PC-9 (cell line): ENCODE measurements at regions of chr9 and their contacts with region 1.

Region 1: GRCh38 chr9:33480087-33480486 is 6.4 kb upstream of the NOL6 start:
- DNase-seq: no peak
- H3K4me3 ChIP-seq: no peak overlapping the region
- H3K27ac ChIP-seq: no peak overlapping the region
- H3K4me1 ChIP-seq: no peaks in the 10 kb centered on the region
- H3K27me3 ChIP-seq: no peaks in the 10 kb centered on the region
- CTCF ChIP-seq: no peak

Region 2: GRCh38 chr9:33498387-33498786 is 18.3 kb after region 1 on chr9:
- CTCF ChIA-PET with region 1: no interaction called
- POLR2A ChIA-PET with region 1: interaction called, 17 read pairs
- intact Hi-C with region 1: no loop called
- DNase-seq: no peak
- H3K4me3 ChIP-seq: no peak overlapping the region
- H3K27ac ChIP-seq: no peak overlapping the region
- H3K4me1 ChIP-seq: no peaks in the 10 kb centered on the region
- H3K27me3 ChIP-seq: no peaks in the 10 kb centered on the region
- CTCF ChIP-seq: peak; percentile 57; the same call in 1 of the 2 replicates